Panc1 (cell line): ENCODE measurements at regions of chr1 and their contacts with region 1.

Region 1: DNA sequence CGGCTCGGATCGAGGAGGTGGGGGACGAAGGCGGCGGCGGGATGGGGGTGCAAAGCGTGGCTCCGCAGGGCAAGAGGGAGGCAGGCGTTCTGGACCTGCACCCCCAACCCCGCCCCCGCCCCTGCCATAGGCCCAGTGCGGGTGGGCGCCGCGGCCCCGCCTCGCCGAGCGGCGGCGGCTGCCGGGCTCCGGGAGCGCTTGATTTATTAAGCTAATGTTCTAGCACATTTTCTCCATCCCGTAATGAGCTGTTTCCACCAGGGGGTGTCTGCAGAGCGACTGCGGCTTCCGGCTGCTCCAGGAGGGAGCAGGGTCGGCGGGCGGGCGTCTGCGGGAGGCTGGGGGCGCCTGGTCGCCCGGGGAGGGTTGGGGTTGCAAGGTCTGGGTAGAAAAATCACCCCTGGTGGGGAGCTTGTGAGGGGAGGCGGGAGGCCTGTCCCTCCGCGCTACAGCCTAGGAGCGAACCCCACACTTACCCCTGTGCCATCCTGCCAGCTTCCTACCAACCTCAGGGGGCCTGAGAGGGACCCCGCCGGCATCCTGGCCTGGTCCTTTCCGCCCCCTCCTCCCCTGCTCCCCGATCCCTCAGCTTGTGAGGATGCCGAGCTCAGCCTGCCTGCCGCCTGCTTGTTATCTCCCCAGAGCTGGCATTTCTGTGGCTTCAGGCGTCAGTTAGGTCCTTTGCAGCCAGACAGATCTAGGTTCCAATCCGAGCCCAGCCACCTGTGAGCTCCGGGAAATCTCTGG is 48.5 kb upstream of the ACOT11 start:
- DNase-seq: no peak
- ATAC-seq: peak; percentile 91
- H3K4me3 ChIP-seq: peak overlapping the region; percentile 35 to 48
- H3K27ac ChIP-seq: no peak overlapping the region
- H3K4me1 ChIP-seq: peaks cover 5% of the 10 kb centered on the region
- H3K27me3 ChIP-seq: 0 out of 2 replicates have a peak, but pooled peaks cover 2% of the 10 kb centered on the region
- CTCF ChIP-seq: peak; percentile 73; the same call in 1 of the 2 replicates

Region 2: DNA sequence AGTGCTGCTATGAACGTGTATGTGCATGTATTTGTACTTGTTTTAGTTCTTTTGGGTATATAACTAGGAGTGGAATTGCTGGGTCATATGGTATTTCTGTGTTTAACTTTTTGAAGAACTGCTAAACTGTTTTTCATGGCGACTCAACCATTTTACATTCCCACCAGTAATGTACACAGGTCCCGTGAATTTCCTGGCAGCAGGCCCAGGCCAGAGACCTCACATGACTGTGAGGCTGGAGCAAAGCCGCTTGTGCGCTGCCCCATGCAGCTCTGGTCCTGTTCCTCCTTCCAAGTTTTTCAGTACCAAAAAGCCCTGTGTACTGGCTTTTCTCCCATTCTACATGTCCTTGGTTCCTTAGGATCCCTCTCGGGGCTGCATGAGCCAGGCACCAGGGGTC is 78.1 kb after region 1 on chr1:
- CTCF ChIA-PET with region 1: no interaction called
- POLR2A ChIA-PET with region 1: no interaction called
- in situ Hi-C with region 1: no loop called
- intact Hi-C with region 1: no loop called
- DNase-seq: no peak
- ATAC-seq: no peak
- H3K4me3 ChIP-seq: no peak overlapping the region
- H3K27ac ChIP-seq: no peak overlapping the region
- H3K4me1 ChIP-seq: no peaks in the 10 kb centered on the region
- H3K27me3 ChIP-seq: no peaks in the 10 kb centered on the region
- CTCF ChIP-seq: no peak

Region 3: DNA sequence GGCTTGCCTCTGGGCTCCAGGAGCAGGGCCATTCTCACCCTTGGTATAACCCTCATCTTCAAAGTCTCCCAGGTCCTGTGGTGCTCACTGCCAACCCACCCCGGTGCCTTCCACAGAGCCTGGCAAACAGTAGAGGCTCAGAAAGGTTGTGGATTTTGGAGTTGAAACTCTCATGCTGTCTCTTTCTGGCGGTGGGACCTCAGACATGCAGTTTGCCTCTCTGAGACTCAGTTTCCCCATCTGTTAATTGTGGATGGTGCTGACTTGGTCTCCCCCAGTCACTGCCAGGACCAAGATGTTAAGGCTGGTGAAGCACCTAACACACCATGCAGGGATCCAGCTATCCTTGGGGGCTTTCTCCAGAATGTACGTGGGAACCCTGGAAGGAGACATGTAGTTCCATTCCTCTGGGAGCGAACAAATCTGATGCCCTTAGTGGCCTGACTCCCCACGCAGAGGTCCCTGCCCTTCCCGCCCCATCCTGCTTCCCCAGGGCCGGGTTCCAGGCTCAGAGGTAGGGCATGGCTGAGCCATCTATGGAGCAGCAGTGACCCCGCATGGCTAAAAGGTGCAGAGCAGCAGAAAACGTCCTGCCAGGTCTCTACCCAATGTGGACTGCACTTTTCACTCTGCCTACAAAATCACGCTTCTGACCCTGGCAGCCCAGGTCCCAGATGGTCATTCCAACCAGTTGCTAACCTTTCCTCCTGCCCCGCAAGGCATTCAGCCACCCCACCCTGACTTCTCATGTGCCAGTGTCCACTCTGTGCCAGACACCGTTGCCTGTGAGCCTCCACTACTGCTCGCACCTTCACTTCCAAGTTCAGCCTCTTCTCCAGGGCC is 310.8 kb after region 1 on chr1:
- CTCF ChIA-PET with region 1: interaction called, 4 read pairs
- POLR2A ChIA-PET with region 1: no interaction called
- in situ Hi-C with region 1: no loop called
- intact Hi-C with region 1: loop called (anchors 5 kb)
- DNase-seq: peak; percentile 67
- ATAC-seq: peak; percentile 95
- H3K4me3 ChIP-seq: no peak overlapping the region
- H3K27ac ChIP-seq: no peak overlapping the region
- H3K4me1 ChIP-seq: no peaks in the 10 kb centered on the region
- H3K27me3 ChIP-seq: no peaks in the 10 kb centered on the region; the same call in 1 of the 2 replicates
- CTCF ChIP-seq: peak; percentile 91